Natural killer cell (primary cell): ENCODE measurements at regions of chr17 and their contacts with region 1.

Region 1: DNA sequence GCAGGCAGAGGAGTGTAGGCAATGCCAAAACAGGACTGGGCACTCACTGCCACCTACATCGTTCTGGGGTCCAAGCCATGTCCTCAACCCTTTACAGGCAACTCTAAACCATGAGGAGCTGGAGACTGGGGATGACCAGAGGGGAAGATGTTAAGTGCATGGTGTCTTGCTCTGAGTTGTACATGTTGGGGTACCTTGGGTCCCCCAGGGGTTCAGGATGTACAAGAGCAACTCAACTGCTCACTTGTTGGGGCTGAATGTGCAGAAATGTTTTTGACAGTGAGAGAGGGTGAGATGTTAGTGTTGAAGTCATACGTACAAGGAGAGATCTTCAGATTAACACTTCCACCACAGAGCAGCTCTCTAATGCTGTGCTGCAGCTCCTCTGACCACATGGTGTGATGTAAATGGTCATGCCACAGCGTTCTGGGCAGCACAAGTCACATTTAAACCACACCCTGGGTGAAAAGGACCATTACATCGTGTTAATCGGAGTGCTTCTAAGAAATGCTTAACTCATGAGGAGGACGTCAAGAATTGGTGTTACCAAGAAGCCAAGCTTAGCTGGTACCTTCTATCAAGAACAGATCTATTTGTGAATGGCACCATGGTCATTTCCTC is 2.4 kb downstream of the CCL18 start:
- DNase-seq: peak; percentile 67 to 78
- ATAC-seq: peak; percentile 81 to 94 (median 93)
- H3K4me3 ChIP-seq: no peak overlapping the region
- H3K4me3 Mint-ChIP-seq: peak overlapping the region; percentile 76
- H3K27ac ChIP-seq: peak overlapping the region; percentile 82
- H3K27ac Mint-ChIP-seq: peak overlapping the region; percentile 95 to 96
- H3K4me1 ChIP-seq: peaks cover 61% of the 10 kb centered on the region
- H3K4me1 Mint-ChIP-seq: peaks cover 88 to 97% of the 10 kb centered on the region in 2 donors
- H3K27me3 ChIP-seq: no peaks in the 10 kb centered on the region
- H3K27me3 Mint-ChIP-seq: no peaks in the 10 kb centered on the region
- CTCF ChIP-seq: no peak

Region 2: DNA sequence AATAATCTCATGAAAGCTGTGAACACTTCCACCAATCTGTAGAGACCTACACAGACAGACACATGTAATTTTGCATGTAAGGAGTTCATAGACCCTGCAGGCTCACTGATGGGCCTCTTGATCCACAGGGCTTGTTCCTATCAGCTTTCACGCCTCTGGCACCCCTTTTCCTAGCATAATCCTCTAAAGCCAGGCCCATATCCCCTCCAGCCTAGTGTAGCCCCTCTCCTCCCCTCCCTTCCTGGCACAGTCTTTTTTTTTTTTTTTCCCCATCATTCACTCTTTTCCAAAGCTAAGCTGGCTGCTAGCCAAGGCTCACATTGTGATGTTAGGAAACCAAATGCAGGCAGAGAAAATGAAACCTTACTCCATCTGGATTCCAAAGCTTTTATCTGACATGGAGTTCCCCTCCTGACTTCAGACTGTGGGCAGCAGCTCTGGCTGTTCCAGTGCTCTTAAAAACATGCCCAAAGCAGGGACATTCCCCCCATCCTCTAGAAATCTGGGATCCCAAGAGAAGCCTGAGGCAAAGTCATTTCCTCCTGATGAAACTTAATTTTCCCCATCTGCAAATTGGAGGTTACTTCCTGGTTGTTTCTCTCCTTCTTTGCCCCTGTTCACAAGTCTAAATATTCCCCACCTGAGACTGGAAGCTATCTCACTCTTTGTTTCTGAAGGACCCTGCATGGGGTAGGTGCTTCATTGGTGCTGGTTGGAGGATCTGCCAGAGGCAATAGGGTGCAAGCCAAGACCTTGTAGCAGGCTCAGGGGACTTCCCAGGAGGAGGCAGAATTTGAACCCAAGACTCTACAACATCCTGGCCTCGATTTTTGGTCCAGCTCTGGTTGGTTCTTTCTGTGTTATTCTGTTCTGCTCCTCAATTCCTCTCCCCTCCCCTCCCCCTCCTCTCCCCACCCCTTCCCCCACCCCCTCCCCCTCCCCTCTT is 176.4 kb before region 1 on chr17:
- intact Hi-C with region 1: loop called (anchors 2 kb)
- DNase-seq: peak in 1 of 2 donors; percentile 62
- ATAC-seq: peak; percentile 21 to 51 (median 32)
- H3K4me3 ChIP-seq: no peak overlapping the region
- H3K4me3 Mint-ChIP-seq: peak overlapping the region; percentile 80
- H3K27ac ChIP-seq: peak overlapping the region; percentile 76
- H3K27ac Mint-ChIP-seq: peak overlapping the region; percentile 97 to 98
- H3K4me1 ChIP-seq: peaks cover 79% of the 10 kb centered on the region
- H3K4me1 Mint-ChIP-seq: peaks cover 67 to 82% of the 10 kb centered on the region in 2 donors
- H3K27me3 ChIP-seq: no peaks in the 10 kb centered on the region
- H3K27me3 Mint-ChIP-seq: no peaks in the 10 kb centered on the region
- CTCF ChIP-seq: no peak

Region 3: GRCh38 chr17:35969558-35970380 is 96.7 kb before region 1 on chr17:
- intact Hi-C with region 1: loop called (anchors 2 kb)
- DNase-seq: peak; percentile 73 to 85
- ATAC-seq: peak; percentile 78 to 93 (median 88)
- H3K4me3 ChIP-seq: no peak overlapping the region
- H3K4me3 Mint-ChIP-seq: peak overlapping the region; percentile 28
- H3K27ac ChIP-seq: no peak overlapping the region
- H3K27ac Mint-ChIP-seq: peak overlapping the region in 1 of 2 donors; percentile 78
- H3K4me1 ChIP-seq: peaks cover 8% of the 10 kb centered on the region
- H3K4me1 Mint-ChIP-seq: peaks cover 10 to 22% of the 10 kb centered on the region in 2 donors
- H3K27me3 ChIP-seq: no peaks in the 10 kb centered on the region
- H3K27me3 Mint-ChIP-seq: no peaks in the 10 kb centered on the region
- CTCF ChIP-seq: peak; percentile 81

Region 4: GRCh38 chr17:36089888-36090836 is 23.7 kb after region 1 on chr17 and contains the start of gene CCL3:
- intact Hi-C with region 1: loop called (anchors 2 kb)
- DNase-seq: peak; percentile 60 to 70
- ATAC-seq: peak; percentile 57 to 77 (median 71)
- H3K4me3 ChIP-seq: peak within 1 kb of the TSS; percentile 33
- H3K4me3 Mint-ChIP-seq: peak within 1 kb of the TSS; percentile 91
- H3K27ac ChIP-seq: peak within 1 kb of the TSS; percentile 87
- H3K27ac Mint-ChIP-seq: peak within 1 kb of the TSS; percentile 100
- H3K4me1 ChIP-seq: peaks cover 55% of the 10 kb centered on the region
- H3K4me1 Mint-ChIP-seq: peaks cover 90 to 91% of the 10 kb centered on the region in 2 donors
- H3K27me3 ChIP-seq: no peaks in the 10 kb centered on the region
- H3K27me3 Mint-ChIP-seq: no peaks in the 10 kb centered on the region
- CTCF ChIP-seq: no peak
- total RNA-seq, gene CCL3: 381 to 547 (median 450) TPM

Region 5: DNA sequence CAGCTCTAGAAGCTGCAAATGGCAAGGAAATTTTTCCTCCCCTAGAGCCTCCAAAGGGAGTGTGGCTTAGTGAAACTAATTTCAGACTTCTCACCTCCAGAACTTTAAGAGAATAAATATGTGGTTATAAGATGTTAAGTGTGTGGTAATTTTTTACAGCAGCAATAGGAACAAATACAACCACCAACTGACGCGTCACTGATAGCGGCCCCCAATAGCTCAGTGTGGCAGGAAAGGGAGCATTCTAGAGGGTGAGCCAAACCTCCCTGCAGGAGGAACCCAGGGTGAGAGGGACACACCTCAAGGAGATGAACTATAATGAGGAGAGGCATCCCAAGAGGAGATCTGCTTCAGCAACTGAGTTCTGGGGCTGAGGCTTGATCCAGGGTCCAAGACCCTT is 41.2 kb after region 1 on chr17:
- intact Hi-C with region 1: loop called (anchors 1 kb)
- DNase-seq: peak in 1 of 2 donors; percentile 59
- ATAC-seq: peak; percentile 23 to 45 (median 31)
- H3K4me3 ChIP-seq: no peak overlapping the region
- H3K4me3 Mint-ChIP-seq: peak overlapping the region; percentile 74
- H3K27ac ChIP-seq: peak overlapping the region; percentile 82
- H3K27ac Mint-ChIP-seq: peak overlapping the region; percentile 94 to 96
- H3K4me1 ChIP-seq: peaks cover 61% of the 10 kb centered on the region
- H3K4me1 Mint-ChIP-seq: peaks cover 78 to 98% of the 10 kb centered on the region in 2 donors
- H3K27me3 ChIP-seq: no peaks in the 10 kb centered on the region
- H3K27me3 Mint-ChIP-seq: no peaks in the 10 kb centered on the region
- CTCF ChIP-seq: no peak

Region 6: DNA sequence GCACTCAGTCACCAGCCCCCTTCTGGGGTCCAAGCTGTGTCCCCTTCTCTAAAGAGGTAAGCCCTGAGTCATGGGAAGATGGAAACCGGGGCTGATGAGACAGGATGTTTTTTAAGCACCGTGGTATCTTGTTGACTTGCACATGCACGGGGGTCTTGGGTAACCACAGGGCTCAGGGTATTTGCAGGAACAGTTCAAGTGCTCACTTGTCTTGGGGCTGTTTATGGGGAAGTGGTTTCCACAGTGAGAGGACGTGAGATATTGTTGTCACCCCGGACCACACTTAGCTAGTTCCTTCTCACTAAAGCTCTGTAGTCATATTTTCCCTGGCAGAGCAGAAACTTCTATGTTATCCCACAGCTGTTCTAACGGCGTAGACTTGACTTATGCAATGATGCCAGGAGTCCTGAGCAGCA is 122.4 kb after region 1 on chr17:
- intact Hi-C with region 1: loop called (anchors 5 kb)
- DNase-seq: peak; percentile 85 to 88
- ATAC-seq: peak; percentile 78 to 90 (median 89)
- H3K4me3 ChIP-seq: no peak overlapping the region
- H3K4me3 Mint-ChIP-seq: peak overlapping the region; percentile 79
- H3K27ac ChIP-seq: peak overlapping the region; percentile 47
- H3K27ac Mint-ChIP-seq: peak overlapping the region; percentile 93 to 98
- H3K4me1 ChIP-seq: peaks cover 80% of the 10 kb centered on the region
- H3K4me1 Mint-ChIP-seq: peaks cover 92 to 96% of the 10 kb centered on the region in 2 donors
- H3K27me3 ChIP-seq: no peaks in the 10 kb centered on the region
- H3K27me3 Mint-ChIP-seq: no peaks in the 10 kb centered on the region
- CTCF ChIP-seq: no peak